HEK293 (cell line): ENCODE measurements at regions of chr6 and their contacts with region 1.

Region 1: GRCh38 chr6:26003102-26003694 is 40.6 kb downstream of the TRIM38 start:
- H3K4me3 ChIP-seq: no peak overlapping the region
- H3K27ac ChIP-seq: no peak overlapping the region
- H3K4me1 ChIP-seq: no peaks in the 10 kb centered on the region
- CTCF ChIP-seq: no peak

Region 2: DNA sequence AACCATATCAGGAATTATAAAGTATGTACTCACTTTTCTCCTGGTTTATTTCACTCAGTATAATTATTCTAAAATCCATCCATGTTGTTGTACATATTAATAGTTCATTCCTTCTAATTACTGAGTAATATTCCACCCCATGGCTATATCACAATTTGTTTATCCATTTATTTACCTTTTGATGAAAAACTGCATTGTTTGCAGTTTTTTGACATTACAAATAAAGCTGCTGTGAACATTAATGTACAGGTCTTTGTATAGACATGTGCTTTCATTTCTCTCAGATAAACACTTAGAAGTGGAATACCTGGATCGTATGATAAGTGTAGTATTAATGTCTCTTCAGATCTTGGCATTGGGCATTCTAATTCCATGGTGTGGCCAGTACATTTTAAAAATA is 133.4 kb before region 1 on chr6:
- CTCF ChIA-PET with region 1: no interaction called
- POLR2A ChIA-PET with region 1: no interaction called
- H3K4me3 ChIP-seq: no peak overlapping the region
- H3K27ac ChIP-seq: no peak overlapping the region
- H3K4me1 ChIP-seq: no peaks in the 10 kb centered on the region
- CTCF ChIP-seq: no peak

Region 3: DNA sequence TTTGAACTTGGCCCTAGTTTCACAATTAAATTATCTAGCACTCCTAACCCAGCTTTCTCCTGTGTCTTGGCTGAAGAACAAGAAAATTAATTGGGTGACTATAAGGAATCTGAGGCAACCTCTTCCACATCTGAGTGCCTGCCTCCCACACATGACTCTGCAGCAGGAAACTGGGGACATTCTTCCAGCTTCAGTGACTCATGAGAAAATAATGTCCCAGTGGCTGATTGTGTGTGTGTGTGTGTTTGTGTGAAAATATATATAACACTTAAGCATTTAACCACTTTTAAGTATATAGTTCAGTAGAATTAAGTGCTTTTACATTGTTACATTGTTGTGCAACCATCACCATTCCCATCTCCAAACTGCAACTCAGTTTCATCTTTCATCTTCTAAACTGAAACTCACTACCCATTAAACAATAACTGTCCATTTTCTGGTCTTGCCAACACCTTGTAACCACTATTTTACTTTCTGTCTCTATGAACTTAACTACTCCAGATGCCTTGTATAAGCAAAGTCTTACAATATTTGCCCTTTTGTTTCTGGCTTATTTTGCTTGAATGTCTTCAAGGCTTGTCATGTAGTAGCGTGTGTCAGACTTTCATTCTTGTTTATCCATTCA is 31.9 kb before region 1 on chr6:
- CTCF ChIA-PET with region 1: interaction called, 19 read pairs
- POLR2A ChIA-PET with region 1: no interaction called
- H3K4me3 ChIP-seq: no peak overlapping the region
- H3K27ac ChIP-seq: no peak overlapping the region
- H3K4me1 ChIP-seq: no peaks in the 10 kb centered on the region
- CTCF ChIP-seq: no peak

Region 4: GRCh38 chr6:25981568-25982263 is 21.5 kb before region 1 on chr6:
- CTCF ChIA-PET with region 1: interaction called, 23 read pairs
- POLR2A ChIA-PET with region 1: no interaction called
- H3K4me3 ChIP-seq: no peak overlapping the region
- H3K27ac ChIP-seq: no peak overlapping the region
- H3K4me1 ChIP-seq: no peaks in the 10 kb centered on the region
- CTCF ChIP-seq: no peak

Region 5: DNA sequence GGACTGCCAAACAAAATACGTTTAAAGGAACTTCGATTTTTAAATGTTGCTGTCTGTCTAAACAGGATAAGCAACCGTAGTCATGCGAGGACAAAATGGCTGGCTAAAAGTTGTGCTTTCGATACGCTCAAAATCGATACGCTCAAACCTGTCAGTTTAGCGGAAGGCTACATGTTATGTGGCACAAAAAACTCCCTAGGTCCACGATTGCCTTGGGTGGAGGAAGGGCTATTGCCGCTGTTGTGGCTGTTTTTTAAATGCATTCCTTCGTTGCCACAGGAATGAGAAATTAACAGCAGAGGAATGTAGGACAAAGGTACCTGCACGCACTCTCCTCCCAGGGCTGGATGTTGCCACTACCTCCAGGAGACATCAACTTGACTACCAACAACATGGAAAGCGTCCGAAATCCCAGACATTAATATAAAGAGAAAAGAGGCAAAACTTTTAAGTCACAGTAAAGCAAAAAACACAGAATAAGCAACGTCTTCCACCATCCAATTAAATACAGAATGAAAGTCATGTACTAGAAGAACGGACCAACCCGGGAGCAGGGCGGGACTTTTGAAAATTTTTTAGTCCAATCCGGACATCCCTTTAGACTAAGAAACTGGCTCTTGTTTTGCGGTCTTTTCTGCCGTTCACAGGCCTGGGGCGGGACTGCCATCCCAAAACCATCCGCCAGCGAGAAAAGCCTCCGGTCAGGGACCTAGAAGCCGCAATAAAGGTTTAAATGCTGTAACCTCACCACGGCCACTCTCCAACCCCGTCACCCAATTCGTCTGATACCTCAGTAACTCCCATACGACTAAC is 51.9 kb after region 1 on chr6:
- CTCF ChIA-PET with region 1: no interaction called
- POLR2A ChIA-PET with region 1: no interaction called
- H3K4me3 ChIP-seq: peak overlapping the region; percentile 85
- H3K27ac ChIP-seq: peak overlapping the region; percentile 81
- H3K4me1 ChIP-seq: peaks cover 5% of the 10 kb centered on the region; the same call in 1 of the 2 replicates
- CTCF ChIP-seq: no peak